ENCODE measurements at regions of chrX and their contacts with region 1.

Region 1: DNA sequence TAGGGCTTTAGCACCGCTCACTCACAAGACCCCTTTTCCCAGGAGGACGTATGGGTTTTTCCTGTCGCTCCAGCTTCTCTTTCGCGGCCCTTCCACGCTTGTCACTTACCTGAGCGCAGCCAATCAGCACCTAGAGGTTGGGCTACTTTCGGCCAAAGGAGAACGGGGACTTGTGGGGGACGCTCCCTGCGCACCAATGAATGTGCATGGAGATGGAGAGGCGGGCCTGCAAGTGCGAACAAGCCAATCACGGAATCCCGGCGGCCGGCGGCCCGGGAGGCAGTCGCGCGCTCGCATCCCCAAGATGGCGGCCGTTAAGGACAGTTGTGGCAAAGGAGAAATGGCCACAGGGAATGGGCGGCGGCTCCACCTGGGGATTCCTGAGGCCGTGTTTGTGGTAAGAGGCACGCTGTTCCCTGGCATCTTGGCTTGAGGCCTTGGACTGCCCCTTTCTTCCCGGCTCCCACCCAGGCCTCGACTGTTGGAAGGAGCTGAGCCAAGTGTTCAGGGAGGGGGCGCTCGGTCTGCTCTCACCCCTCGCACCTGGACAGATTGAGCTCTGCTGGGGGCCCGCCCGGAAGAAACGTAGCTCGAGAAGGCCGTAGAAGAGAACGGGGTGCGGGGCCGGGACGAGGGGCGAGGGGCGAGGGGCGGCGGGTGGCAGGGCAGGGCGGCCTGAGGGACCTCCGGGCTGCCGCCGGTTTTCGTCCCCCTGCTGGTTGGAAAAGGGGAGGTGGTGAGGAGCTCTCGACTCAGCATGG is at the start of gene VBP1:
- DNase-seq: peak; percentile 84 to 93 (median 86)
- H3K4me3 ChIP-seq: peak within 1 kb of the TSS; percentile 76 to 79
- H3K4me3 Mint-ChIP-seq: peak within 1 kb of the TSS; percentile 90 to 97 (median 94)
- H3K27ac ChIP-seq: peak within 1 kb of the TSS; percentile 78
- H3K27ac Mint-ChIP-seq: peak within 1 kb of the TSS; percentile 84 to 96 (median 91)
- H3K4me1 ChIP-seq: peaks cover 18% of the 10 kb centered on the region
- H3K4me1 Mint-ChIP-seq: peaks cover 17 to 36% (median 22%) of the 10 kb centered on the region in 4 donors
- H3K27me3 ChIP-seq: no peaks in the 10 kb centered on the region
- H3K27me3 Mint-ChIP-seq: no peaks in the 10 kb centered on the region
- total RNA-seq, gene VBP1: 30.8 to 33.9 TPM

Region 2: DNA sequence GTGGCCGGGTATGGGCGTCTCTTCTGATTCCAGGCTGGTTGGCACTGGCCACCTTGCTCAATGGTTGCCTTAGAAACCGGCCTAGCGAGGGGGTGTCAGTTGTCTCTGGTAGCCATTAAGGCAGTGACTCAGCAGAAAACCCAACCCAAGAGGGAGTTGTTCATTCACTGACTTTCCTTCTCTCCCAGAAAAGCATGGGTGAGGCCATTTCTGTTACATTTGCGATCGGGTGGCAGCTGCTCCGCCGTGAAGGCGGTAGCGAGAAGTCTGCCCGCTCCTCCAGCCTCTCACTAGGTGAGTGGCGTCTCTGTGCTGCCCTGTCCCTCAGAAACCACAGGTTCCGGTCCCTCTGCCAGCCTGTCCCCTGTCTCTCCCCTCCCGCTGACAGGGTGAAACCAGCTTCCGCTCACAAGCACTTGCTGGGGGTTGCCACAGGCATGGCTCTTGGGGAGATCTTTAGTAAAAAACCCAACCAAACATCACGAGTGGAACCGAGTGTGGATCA is 1214.1 kb before region 1 on chrX:
- CTCF ChIA-PET with region 1: no interaction called
- POLR2A ChIA-PET with region 1: no interaction called
- intact Hi-C with region 1: no loop called
- DNase-seq: peak; percentile 26 to 64 (median 39)
- H3K4me3 ChIP-seq: peak overlapping the region in 1 of 2 donors; percentile 40
- H3K4me3 Mint-ChIP-seq: peak overlapping the region; percentile 67 to 88 (median 79)
- H3K27ac ChIP-seq: no peak overlapping the region
- H3K27ac Mint-ChIP-seq: peak overlapping the region; percentile 43 to 92 (median 79)
- H3K4me1 ChIP-seq: peaks cover 15% of the 10 kb centered on the region
- H3K4me1 Mint-ChIP-seq: peaks cover 10 to 18% (median 13%) of the 10 kb centered on the region in 4 donors
- H3K27me3 ChIP-seq: no peaks in the 10 kb centered on the region
- H3K27me3 Mint-ChIP-seq: no peaks in the 10 kb centered on the region

Region 3: GRCh38 chrX:155070975-155071693 is 145.2 kb before region 1 on chrX and contains the starts of genes BRCC3, CMC4 and MTCP1:
- CTCF ChIA-PET with region 1: interaction called, 3 read pairs
- POLR2A ChIA-PET with region 1: interaction called, 3 read pairs
- intact Hi-C with region 1: loop called (anchors 1 kb)
- DNase-seq: peak; percentile 70 to 79 (median 77)
- H3K4me3 ChIP-seq: peak within 1 kb of the TSS; percentile 47 to 72
- H3K4me3 Mint-ChIP-seq: peak within 1 kb of the TSS; percentile 87 to 96 (median 90)
- H3K27ac ChIP-seq: peak within 1 kb of the TSS; percentile 82
- H3K27ac Mint-ChIP-seq: peak within 1 kb of the TSS; percentile 93 to 96 (median 95)
- H3K4me1 ChIP-seq: peaks cover 43% of the 10 kb centered on the region
- H3K4me1 Mint-ChIP-seq: peaks cover 35 to 70% (median 40%) of the 10 kb centered on the region in 4 donors
- H3K27me3 ChIP-seq: no peaks in the 10 kb centered on the region
- H3K27me3 Mint-ChIP-seq: no peaks in the 10 kb centered on the region
- total RNA-seq, gene BRCC3: 19.2 to 19.7 TPM
- total RNA-seq, gene CMC4: 6.1 to 7.0 TPM
- total RNA-seq, gene MTCP1: 21.8 to 24.2 TPM

Region 4: DNA sequence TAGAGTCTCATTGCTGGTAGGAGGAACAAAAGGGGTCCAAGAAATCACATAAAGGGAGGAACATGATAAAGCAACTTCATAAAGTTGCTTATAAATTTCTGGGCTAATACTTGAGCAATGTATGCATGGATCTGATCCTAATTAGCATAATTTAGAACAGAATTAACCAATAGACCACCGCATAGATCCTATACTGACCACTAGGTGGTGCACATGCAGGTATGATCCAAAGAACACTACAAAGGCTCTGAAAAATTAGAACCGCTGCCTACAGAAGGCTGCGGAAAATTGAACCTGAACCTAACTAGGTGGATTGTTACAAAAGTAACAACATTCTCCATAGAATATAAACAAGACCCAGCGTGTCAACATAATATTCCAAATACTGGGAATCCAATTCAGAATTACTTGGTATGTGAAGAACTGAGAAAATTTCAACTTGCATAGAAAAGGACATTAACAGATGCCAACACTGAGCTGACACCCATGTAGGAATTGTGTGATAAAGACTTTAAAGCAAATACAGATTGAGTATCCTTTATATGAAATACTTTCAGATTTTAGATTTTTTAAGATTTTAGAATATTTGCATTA is 121.8 kb before region 1 on chrX:
- CTCF ChIA-PET with region 1: interaction called, 19 read pairs
- POLR2A ChIA-PET with region 1: interaction called, 3 read pairs
- intact Hi-C with region 1: loop called (anchors 1 kb)
- DNase-seq: peak; percentile 41 to 47 (median 45)
- H3K4me3 ChIP-seq: no peak overlapping the region
- H3K4me3 Mint-ChIP-seq: no peak overlapping the region
- H3K27ac ChIP-seq: no peak overlapping the region
- H3K27ac Mint-ChIP-seq: no peak overlapping the region
- H3K4me1 ChIP-seq: no peaks in the 10 kb centered on the region
- H3K4me1 Mint-ChIP-seq: peaks cover 0 to 6% (median 4%) of the 10 kb centered on the region in 4 donors
- H3K27me3 ChIP-seq: no peaks in the 10 kb centered on the region
- H3K27me3 Mint-ChIP-seq: no peaks in the 10 kb centered on the region

Region 5: DNA sequence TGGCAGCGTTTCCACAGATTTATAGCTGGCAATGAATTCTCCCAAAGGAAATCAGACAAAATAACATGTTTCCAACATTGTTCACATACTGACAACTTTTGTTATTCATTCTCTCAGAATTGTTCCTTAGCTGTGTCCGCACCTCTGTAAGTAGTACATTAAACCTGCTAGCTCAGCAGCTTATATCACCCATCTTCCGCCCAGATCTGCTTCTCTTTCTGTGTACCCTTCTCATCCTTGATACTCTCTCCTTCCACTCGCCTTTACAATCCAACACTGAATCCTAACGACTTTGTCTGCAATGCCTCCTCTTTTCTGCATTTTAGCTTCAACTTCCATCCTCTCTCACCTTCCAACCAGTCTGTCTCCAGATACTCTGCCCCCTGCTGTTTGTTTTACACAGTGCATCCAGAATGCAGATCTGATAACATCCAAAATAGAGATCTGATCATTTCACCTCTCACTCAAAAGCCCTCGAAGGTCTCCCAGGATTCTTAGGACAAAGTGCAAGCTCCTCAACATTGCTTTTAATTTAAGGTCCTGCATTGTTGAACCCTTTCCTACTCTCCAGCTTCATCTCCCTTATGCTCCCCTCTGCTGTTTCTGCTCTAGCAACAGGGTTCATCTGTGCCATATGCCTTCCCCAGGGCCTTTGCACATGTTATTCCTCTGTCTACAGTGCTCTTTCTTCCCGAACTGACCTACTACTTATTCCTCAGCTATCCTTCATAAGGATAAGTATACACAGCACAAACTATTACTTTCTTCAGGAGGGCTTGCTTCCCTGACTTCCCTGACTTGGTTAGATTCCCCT is 67.4 kb before region 1 on chrX:
- CTCF ChIA-PET with region 1: interaction called, 11 read pairs
- POLR2A ChIA-PET with region 1: interaction called, 3 read pairs
- intact Hi-C with region 1: loop called (anchors 10 kb)
- DNase-seq: peak; percentile 6 to 24 (median 23)
- H3K4me3 ChIP-seq: no peak overlapping the region
- H3K4me3 Mint-ChIP-seq: no peak overlapping the region
- H3K27ac ChIP-seq: no peak overlapping the region
- H3K27ac Mint-ChIP-seq: no peak overlapping the region
- H3K4me1 ChIP-seq: no peaks in the 10 kb centered on the region
- H3K4me1 Mint-ChIP-seq: peaks cover 0 to 3% (median 1%) of the 10 kb centered on the region in 4 donors
- H3K27me3 ChIP-seq: no peaks in the 10 kb centered on the region
- H3K27me3 Mint-ChIP-seq: peaks cover 0 to 1% of the 10 kb centered on the region in 2 donors

Region 6: GRCh38 chrX:155188786-155189185 is 27.6 kb before region 1 on chrX:
- CTCF ChIA-PET with region 1: interaction called, 20 read pairs
- POLR2A ChIA-PET with region 1: interaction called, 40 read pairs
- intact Hi-C with region 1: loop called (anchors 1 kb)
- DNase-seq: peak; percentile 52 to 67 (median 63)
- H3K4me3 ChIP-seq: no peak overlapping the region
- H3K4me3 Mint-ChIP-seq: peak overlapping the region; percentile 60 to 84 (median 73)
- H3K27ac ChIP-seq: no peak overlapping the region
- H3K27ac Mint-ChIP-seq: peak overlapping the region in 6 of 7 donors; percentile 47 to 87 (median 72)
- H3K4me1 ChIP-seq: peaks cover 25% of the 10 kb centered on the region
- H3K4me1 Mint-ChIP-seq: peaks cover 25 to 54% (median 40%) of the 10 kb centered on the region in 4 donors
- H3K27me3 ChIP-seq: no peaks in the 10 kb centered on the region
- H3K27me3 Mint-ChIP-seq: no peaks in the 10 kb centered on the region

Region 7: GRCh38 chrX:155246748-155247147 is 30.4 kb after region 1 on chrX:
- CTCF ChIA-PET with region 1: no interaction called
- POLR2A ChIA-PET with region 1: no interaction called
- intact Hi-C with region 1: no loop called
- DNase-seq: no peak
- H3K4me3 ChIP-seq: no peak overlapping the region
- H3K4me3 Mint-ChIP-seq: no peak overlapping the region
- H3K27ac ChIP-seq: no peak overlapping the region
- H3K27ac Mint-ChIP-seq: no peak overlapping the region
- H3K4me1 ChIP-seq: no peaks in the 10 kb centered on the region
- H3K4me1 Mint-ChIP-seq: peaks cover 0 to 4% (median 1%) of the 10 kb centered on the region in 4 donors
- H3K27me3 ChIP-seq: no peaks in the 10 kb centered on the region
- H3K27me3 Mint-ChIP-seq: no peaks in the 10 kb centered on the region

Region 8: DNA sequence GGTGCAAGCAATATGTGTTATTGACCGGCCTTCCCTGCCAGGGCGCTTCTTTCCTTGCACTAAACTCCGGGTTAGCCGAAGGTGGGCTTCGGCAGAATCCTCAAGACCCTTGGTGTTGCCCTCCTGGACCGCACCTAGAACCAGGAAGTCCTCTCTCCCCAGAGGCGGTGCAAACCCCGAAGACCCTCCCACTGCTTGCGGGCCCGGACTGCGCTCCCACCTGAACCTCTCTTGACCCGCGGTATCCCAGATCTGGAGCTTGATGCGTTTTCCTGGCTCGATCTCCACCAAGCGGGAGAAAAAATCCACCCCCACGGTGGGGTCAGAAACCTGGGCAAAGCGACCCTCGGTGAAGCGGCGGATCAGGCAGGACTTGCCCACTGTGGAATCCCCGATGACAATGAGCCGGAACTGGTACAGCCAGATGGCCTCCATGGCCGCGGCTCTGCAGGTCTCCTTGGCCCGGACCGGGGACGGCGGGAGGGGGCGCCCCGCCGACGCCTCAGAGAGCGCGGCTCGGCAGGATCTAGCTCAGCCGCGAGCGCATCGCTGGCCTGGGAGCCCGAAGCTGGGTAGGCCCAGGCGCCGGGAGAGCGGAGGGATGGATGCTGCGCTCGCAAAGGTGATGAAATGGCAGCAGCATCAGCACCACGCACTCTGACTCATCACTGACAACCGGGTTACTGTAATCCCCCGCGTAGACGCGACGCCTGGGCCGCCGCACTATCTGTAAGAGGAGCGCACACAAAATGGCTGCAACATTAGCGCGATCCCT is 47.7 kb after region 1 on chrX and contains the start of gene RAB39B:
- CTCF ChIA-PET with region 1: interaction called, 3 read pairs
- POLR2A ChIA-PET with region 1: interaction called, 14 read pairs
- intact Hi-C with region 1: loop called (anchors 1 kb)
- DNase-seq: peak; percentile 65 to 83 (median 72)
- H3K4me3 ChIP-seq: peak within 1 kb of the TSS; percentile 42 to 78
- H3K4me3 Mint-ChIP-seq: peak within 1 kb of the TSS; percentile 66 to 91 (median 83)
- H3K27ac ChIP-seq: peak within 1 kb of the TSS; percentile 87
- H3K27ac Mint-ChIP-seq: peak within 1 kb of the TSS; percentile 62 to 97 (median 82)
- H3K4me1 ChIP-seq: peaks cover 31% of the 10 kb centered on the region
- H3K4me1 Mint-ChIP-seq: peaks cover 10 to 40% (median 16%) of the 10 kb centered on the region in 4 donors
- H3K27me3 ChIP-seq: no peaks in the 10 kb centered on the region
- H3K27me3 Mint-ChIP-seq: no peaks in the 10 kb centered on the region
- total RNA-seq, gene RAB39B: 16.5 to 16.6 TPM